CD8-positive, alpha-beta T cell (primary cell): ENCODE measurements at regions of chr12 and their contacts with region 1.

Region 1: DNA sequence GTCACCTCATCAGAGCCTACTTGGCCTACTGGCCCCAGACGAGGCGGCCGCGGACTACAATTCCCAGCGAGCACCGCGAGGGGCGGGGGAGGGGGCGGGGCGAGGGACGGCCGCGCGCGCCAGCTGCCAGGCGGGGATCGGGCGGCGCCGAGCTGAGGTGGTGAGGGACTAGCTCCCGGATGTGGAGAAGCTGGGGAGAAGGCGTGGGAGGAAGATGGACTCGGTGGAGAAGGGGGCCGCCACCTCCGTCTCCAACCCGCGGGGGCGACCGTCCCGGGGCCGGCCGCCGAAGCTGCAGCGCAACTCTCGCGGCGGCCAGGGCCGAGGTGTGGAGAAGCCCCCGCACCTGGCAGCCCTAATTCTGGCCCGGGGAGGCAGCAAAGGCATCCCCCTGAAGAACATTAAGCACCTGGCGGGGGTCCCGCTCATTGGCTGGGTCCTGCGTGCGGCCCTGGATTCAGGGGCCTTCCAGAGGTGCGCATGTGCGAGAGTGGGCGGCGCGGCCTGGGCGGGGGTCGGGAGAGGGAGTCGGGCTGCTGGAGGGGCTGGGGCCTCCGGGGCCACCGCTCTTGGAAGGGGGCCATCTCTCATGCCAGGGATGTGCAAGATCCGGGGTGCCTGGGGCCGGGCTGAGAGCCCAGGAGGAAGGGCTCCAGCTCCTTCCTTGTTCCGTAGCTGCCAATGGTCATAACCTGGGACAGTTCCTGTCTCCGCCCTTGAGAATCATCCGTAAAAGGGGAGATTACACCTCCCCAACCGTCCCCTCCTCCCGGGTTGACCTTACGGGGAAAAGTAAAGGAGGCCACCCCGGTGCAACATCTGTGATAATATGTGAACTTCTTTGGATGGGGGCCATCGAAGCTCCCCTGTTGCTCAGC is at the start of gene CMAS:
- DNase-seq: peak; percentile 63 to 89 (median 78)
- ATAC-seq: peak; percentile 90
- H3K4me3 ChIP-seq: peak within 1 kb of the TSS; percentile 71 to 91
- H3K4me3 Mint-ChIP-seq: peak within 1 kb of the TSS; percentile 95
- H3K27ac ChIP-seq: peak within 1 kb of the TSS; percentile 56 to 65
- H3K27ac Mint-ChIP-seq: peak within 1 kb of the TSS; percentile 91
- H3K4me1 ChIP-seq: peaks cover 16% of the 10 kb centered on the region
- H3K4me1 Mint-ChIP-seq: peaks cover 43% of the 10 kb centered on the region
- H3K27me3 ChIP-seq: peaks cover 0 to 2% of the 10 kb centered on the region in 2 experiments
- H3K27me3 Mint-ChIP-seq: no peaks in the 10 kb centered on the region
- CTCF ChIP-seq: no peak
- total RNA-seq, gene CMAS: 4.4 to 7.7 TPM

Region 2: DNA sequence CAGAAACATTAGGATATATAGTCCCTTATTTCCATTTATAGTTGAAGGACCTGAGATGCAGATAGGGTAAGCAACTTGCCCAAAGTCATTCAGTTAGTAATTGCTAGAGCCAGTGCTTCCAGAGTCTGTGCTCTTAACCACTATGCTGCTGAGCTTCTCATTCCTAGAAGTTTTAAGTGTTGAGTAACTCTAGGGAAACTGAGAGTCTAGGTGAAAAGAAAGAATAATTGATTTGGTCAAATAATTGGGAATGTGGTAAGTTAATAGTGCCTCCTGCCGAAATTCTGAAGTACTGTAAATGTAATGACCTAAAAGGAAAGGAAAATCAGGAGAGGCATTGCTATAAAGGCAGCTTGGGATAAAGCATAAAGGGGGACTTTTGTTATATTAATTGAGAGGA is 594.8 kb before region 1 on chr12:
- CTCF ChIA-PET with region 1: no interaction called
- POLR2A ChIA-PET with region 1: no interaction called
- intact Hi-C with region 1: loop called in 1 of 2 experiments (anchors 1 kb)
- DNase-seq: no peak
- ATAC-seq: no peak
- H3K4me3 ChIP-seq: no peak overlapping the region
- H3K4me3 Mint-ChIP-seq: no peak overlapping the region
- H3K27ac ChIP-seq: no peak overlapping the region
- H3K27ac Mint-ChIP-seq: peak overlapping the region; percentile 33
- H3K4me1 ChIP-seq: peaks cover 11% of the 10 kb centered on the region
- H3K4me1 Mint-ChIP-seq: peaks cover 28% of the 10 kb centered on the region
- H3K27me3 ChIP-seq: no peaks in the 10 kb centered on the region
- H3K27me3 Mint-ChIP-seq: no peaks in the 10 kb centered on the region
- CTCF ChIP-seq: no peak

Region 3: GRCh38 chr12:21613931-21614330 is 432.4 kb before region 1 on chr12:
- CTCF ChIA-PET with region 1: no interaction called
- POLR2A ChIA-PET with region 1: no interaction called
- intact Hi-C with region 1: loop called in 1 of 2 experiments (anchors 10 kb)
- DNase-seq: no peak
- ATAC-seq: no peak
- H3K4me3 ChIP-seq: peak overlapping the region in 1 of 2 experiments; percentile 19
- H3K4me3 Mint-ChIP-seq: peak overlapping the region; percentile 29
- H3K27ac ChIP-seq: peak overlapping the region; percentile 32 to 68
- H3K27ac Mint-ChIP-seq: peak overlapping the region; percentile 92
- H3K4me1 ChIP-seq: peaks cover 54% of the 10 kb centered on the region
- H3K4me1 Mint-ChIP-seq: peaks cover 58% of the 10 kb centered on the region
- H3K27me3 ChIP-seq: no peaks in the 10 kb centered on the region
- H3K27me3 Mint-ChIP-seq: no peaks in the 10 kb centered on the region
- CTCF ChIP-seq: no peak

Region 4: DNA sequence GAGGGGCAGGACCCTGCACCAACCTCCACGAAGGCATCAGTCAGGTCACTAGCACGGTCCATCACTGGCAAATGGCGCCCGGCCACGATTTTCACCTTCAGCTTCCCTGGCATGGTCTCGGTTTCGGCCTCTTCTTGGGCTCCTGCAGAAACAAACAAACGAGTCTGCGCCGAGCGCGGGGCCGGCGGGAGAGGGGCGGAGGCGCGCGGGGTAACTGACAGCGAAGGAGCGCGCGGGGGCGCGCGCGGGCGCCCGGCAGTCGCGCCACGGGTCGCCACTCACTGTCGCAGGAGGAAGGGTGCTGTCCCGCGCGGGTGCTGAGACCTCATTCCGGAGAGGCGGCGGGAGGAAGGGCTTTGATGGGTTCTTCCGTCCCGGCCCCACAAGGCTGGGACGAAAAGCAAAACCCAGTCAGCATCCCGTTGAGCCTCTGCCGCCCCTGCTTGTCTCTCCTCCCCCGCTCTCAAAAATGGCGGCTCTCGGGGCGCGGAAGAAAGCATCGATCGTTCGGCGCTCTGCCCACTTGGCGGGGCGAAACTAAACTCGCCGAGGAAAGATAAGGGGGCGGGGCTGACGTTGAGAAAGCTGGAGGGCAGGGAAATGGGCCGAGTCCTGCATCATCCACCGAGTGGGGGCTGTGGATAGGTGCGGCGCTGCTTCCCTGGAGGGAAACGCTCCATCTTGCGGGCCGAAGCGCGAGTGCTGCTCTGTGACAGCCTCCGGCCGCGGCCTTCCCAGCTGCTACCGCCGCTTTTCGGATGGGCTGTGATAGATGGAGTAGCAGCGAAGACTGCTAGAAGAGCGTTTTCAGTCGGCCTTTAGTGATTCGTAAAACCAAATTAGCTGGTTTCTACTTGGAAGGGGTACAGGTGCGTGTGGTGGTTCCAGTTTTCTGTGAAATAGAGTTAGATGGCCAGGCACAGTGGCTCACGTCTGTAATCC is 498.0 kb after region 1 on chr12 and contains the start of gene C2CD5:
- CTCF ChIA-PET with region 1: no interaction called
- POLR2A ChIA-PET with region 1: no interaction called
- intact Hi-C with region 1: loop called (anchors 1 kb)
- DNase-seq: peak; percentile 92 to 99 (median 95)
- ATAC-seq: peak; percentile 91
- H3K4me3 ChIP-seq: peak within 1 kb of the TSS; percentile 79 to 99
- H3K4me3 Mint-ChIP-seq: peak within 1 kb of the TSS; percentile 94
- H3K27ac ChIP-seq: peak within 1 kb of the TSS; percentile 92
- H3K27ac Mint-ChIP-seq: peak within 1 kb of the TSS; percentile 94
- H3K4me1 ChIP-seq: peaks cover 25% of the 10 kb centered on the region
- H3K4me1 Mint-ChIP-seq: peaks cover 38% of the 10 kb centered on the region
- H3K27me3 ChIP-seq: no peaks in the 10 kb centered on the region
- H3K27me3 Mint-ChIP-seq: no peaks in the 10 kb centered on the region
- CTCF ChIP-seq: peak; percentile 16
- total RNA-seq, gene C2CD5: 19.5 to 24.4 TPM